Dorsolateral prefrontal cortex (tissue), 120 donors: ENCODE measurements at regions of chr16 and their contacts with region 1.

Region 1: GRCh38 chr16:57300387-57301125 is 16.1 kb upstream of the PLLP start:
- DNase-seq: peak; percentile 97 to 100 (median 99)
- H3K4me3 ChIP-seq: peak overlapping the region; percentile 29 to 73 (median 60)
- H3K27ac ChIP-seq: peak overlapping the region; percentile 81 to 99 (median 95)
- H3K27me3 ChIP-seq: no peaks in the 10 kb centered on the region
- CTCF ChIP-seq: peak; percentile 89 to 100 (median 98)

Region 2: DNA sequence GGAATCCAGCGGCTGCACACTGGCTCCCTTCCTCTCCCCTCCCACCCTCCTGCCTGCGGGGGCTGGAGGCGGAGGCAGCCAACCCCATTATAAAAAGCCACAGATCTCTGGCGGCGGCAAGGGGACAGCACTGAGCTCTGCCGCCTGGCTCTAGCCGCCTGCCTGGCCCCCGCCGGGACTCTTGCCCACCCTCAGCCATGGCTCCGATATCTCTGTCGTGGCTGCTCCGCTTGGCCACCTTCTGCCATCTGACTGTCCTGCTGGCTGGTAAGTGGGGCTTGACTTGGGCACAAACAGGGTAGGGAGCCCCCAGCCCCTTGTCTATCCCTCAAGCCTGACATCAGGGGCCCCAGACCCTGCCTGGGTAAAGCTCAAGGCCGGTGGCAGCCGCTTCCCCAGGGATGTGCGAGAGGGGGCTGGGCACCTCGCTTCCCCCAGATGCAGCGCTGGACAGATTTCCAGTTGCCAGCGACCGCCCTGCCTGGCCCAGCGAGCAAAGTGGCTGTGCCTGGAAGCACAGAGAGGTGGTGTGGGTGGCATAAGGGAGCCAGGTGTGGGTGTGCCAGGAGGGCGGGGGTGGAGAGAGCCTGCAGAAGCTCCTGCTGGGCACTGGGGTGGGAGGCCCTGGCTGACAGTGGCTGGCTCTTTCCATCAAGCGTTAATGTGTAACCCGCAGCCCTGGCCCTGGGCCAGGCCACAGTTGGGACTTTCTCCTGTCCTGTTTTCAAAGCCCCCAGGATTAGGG is 72.0 kb after region 1 on chr16 and contains the start of gene CX3CL1:
- intact Hi-C with region 1: loop called in 1 of 2 experiments (anchors 5 kb)
- DNase-seq: peak; percentile 45 to 90 (median 82)
- H3K4me3 ChIP-seq: peak within 1 kb of the TSS; percentile 27 to 83 (median 68)
- H3K27ac ChIP-seq: peak within 1 kb of the TSS in 58 of 59 donors; percentile 61 to 97 (median 91)
- H3K27me3 ChIP-seq: no peaks in the 10 kb centered on the region
- CTCF ChIP-seq: peak in 21 of 56 donors; percentile 11 to 37 (median 19)
- total RNA-seq, gene CX3CL1: 32.3 to 105 (median 74.3) TPM

Region 3: DNA sequence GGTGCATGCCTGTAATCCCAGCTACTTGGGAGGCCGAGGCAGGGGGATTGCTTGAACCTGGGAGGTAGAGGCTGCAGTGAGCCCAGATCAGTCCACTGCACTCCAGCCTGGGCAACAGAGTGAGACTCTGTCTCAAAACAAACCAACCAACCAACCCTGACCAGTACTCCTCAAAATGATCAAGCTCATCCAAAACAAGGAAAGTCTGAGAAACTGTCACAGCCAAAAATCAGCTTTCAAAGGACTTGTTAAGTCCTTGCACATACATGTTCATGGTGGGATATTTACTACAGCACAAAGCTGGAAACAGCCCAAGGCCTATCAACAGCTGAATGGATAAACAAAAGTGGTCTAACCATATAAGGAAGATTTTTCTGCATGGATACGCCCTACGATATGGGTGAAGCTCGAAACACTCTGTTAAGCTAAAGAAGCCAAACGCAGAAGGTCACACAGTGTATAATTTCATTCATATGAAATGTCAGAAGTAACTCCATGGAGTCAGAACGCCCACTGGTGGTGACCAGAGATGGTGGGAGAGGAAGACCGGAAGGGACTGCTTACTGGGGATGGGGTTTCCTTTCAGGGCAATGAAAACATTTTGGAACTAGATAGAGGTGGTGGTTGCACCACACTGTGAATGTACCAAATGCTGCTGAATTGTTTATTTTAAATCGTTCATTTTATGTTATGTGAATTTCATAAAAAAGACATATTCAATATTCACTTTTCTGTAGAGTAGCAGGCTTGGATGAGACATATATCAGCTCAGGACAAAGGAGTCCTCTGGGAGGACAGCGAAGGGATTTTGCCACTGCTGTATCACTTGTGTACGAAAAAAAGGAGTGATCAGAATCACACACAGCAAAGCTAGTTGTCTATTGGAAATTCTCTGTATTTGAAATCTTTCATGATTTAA is 121.7 kb after region 1 on chr16:
- intact Hi-C with region 1: loop called (anchors 1 kb)
- DNase-seq: no peak
- H3K4me3 ChIP-seq: no peak overlapping the region
- H3K27ac ChIP-seq: peak overlapping the region in 1 of 59 donors; percentile 36
- H3K27me3 ChIP-seq: no peaks in the 10 kb centered on the region
- CTCF ChIP-seq: peak in 54 of 56 donors; percentile 20 to 70 (median 54)

Region 4: DNA sequence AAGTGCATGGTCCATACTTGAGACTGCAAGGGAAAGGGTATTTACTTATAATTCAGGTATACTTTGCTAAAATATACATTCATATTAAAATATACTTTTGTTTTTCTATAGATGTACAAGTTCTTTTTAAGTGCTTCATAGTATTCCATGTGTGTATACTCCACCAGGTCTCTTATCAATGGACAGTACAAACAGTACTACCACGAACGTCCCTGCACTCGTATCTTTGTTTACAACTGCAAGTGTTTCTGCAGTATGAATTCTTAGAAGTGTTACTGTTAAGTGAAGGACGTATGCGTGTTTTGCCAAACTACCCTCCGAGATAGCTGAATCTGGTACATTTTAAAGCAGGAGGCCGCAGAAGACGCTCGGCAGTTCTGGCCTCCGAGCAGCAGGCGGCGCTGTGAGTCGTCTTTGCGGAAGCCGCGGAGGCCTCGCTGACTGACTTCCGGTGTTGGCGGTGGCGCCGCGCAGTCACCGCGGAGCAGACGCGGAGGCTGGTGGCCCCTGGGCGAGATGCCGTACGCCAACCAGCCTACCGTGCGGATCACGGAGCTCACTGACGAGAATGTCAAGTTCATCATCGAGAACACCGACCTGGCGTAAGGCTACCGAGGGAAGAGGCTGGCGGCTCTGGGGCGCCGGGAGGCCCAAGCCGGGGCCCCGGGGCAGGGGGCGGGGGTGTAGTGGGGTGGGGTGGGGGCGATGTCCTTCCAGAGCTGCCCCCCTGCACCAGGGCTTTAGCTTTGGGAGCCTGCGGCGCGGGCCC is 161.8 kb after region 1 on chr16 and contains the start of gene POLR2C:
- intact Hi-C with region 1: no loop called
- DNase-seq: peak; percentile 74 to 89 (median 84)
- H3K4me3 ChIP-seq: peak within 1 kb of the TSS; percentile 80 to 100 (median 93)
- H3K27ac ChIP-seq: peak within 1 kb of the TSS in 57 of 59 donors; percentile 37 to 95 (median 88)
- H3K27me3 ChIP-seq: no peaks in the 10 kb centered on the region
- CTCF ChIP-seq: peak; percentile 94 to 100 (median 98)
- total RNA-seq, gene POLR2C: 47.5 to 83.3 (median 64.4) TPM